ENCODE measurements at regions of chr7 and their contacts with region 1.

Region 1: GRCh38 chr7:105652359-105652993 is 71.2 kb upstream of the EFCAB10 start:
- DNase-seq: peak; percentile 67
- H3K4me3 ChIP-seq: no peak overlapping the region
- H3K27ac ChIP-seq: no peak overlapping the region
- H3K4me1 ChIP-seq: no peaks in the 10 kb centered on the region
- H3K27me3 ChIP-seq: no peaks in the 10 kb centered on the region
- CTCF ChIP-seq: peak; percentile 74 to 91
- POLR2A ChIP-seq: no peak

Region 2: GRCh38 chr7:105662998-105663397 is 10.5 kb after region 1 on chr7:
- CTCF ChIA-PET with region 1: interaction called, 11 read pairs
- POLR2A ChIA-PET with region 1: no interaction called
- dilution Hi-C with region 1: no loop called
- intact Hi-C with region 1: no loop called
- DNase-seq: no peak
- H3K4me3 ChIP-seq: no peak overlapping the region
- H3K27ac ChIP-seq: no peak overlapping the region
- H3K4me1 ChIP-seq: no peaks in the 10 kb centered on the region
- H3K27me3 ChIP-seq: no peaks in the 10 kb centered on the region
- CTCF ChIP-seq: no peak
- POLR2A ChIP-seq: no peak

Region 3: DNA sequence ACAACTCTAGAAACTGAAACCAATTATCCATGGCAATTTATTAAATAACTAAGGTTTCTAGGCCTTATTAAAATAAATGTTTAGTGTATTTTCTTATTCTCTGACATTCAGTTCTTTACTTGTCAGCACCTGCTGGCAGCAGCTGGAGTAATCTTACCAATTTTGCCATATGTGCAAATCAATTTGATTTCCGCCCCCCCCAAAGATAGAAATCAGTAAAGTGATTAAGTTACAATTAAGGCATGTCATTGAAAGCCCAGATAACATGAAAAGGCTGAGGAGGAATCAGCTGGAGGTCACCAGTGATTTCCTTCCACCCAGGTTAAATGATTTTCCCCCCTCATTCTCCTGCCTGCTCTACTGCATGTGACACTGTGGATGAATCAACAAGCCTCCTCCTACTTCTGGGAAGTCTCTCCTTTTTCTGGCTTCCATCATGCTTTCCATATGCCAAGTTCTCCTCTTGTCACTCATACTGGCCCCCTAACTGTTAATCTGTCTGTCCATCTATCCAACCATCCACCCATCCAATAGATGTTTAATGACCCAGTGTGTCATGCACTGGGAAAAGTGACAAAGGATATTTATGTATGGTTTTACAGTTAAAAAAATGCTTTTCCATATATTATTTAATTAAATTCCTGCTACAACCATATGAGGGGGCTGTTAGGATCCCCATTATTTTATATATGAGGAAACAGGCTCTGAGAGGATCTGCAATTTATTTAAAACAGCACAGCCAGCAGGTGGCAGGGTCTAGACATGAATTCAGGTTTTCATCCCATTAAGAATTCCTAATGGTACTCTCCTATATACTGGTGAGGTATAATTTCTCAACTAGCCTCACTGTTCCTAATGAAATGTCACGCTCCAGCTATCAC is 107.4 kb after region 1 on chr7:
- CTCF ChIA-PET with region 1: interaction called, 9 read pairs
- POLR2A ChIA-PET with region 1: no interaction called
- dilution Hi-C with region 1: no loop called
- intact Hi-C with region 1: loop called (anchors 2 kb)
- DNase-seq: peak; percentile 64
- H3K4me3 ChIP-seq: no peak overlapping the region
- H3K27ac ChIP-seq: no peak overlapping the region
- H3K4me1 ChIP-seq: no peaks in the 10 kb centered on the region
- H3K27me3 ChIP-seq: no peaks in the 10 kb centered on the region
- CTCF ChIP-seq: peak; percentile 33 to 43
- POLR2A ChIP-seq: no peak

Region 4: GRCh38 chr7:106166655-106167342 is 514.3 kb after region 1 on chr7:
- CTCF ChIA-PET with region 1: interaction called, 4 read pairs
- POLR2A ChIA-PET with region 1: no interaction called
- dilution Hi-C with region 1: no loop called
- intact Hi-C with region 1: loop called (anchors 1 kb)
- DNase-seq: peak; percentile 69
- H3K4me3 ChIP-seq: no peak overlapping the region
- H3K27ac ChIP-seq: no peak overlapping the region
- H3K4me1 ChIP-seq: no peaks in the 10 kb centered on the region
- H3K27me3 ChIP-seq: no peaks in the 10 kb centered on the region
- CTCF ChIP-seq: peak; percentile 63 to 70
- POLR2A ChIP-seq: no peak

Measured in endothelial cell of umbilical vein (primary cell).